ENCODE measurements at regions of chr20 and their contacts with region 1.

Region 1: GRCh38 chr20:31951530-31952453 is at the start of gene PDRG1:
- DNase-seq: peak; percentile 90 to 97
- ATAC-seq: peak; percentile 98
- total RNA-seq, gene PDRG1: 7.3 to 8.0 TPM

Region 2: DNA sequence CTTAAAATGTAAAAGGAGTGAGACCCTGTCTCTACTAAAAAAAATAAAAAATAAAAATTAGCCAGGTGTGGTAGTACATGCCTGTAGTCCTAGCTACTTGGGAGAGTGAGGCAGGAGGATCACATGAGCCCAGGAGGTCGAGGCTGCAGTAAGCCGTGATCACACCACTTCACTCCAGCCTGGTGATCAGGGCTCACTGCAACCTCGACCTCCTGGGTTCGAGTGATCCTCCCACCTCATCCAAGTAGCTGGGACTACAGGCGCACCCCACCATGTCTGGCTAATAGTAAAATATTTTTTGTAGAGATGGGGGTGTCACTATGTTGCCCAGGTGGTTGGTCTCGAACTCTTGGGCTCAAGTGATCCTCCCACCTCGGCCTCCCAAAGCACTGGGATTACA is 98.3 kb before region 1 on chr20:
- intact Hi-C with region 1: loop called in 1 of 2 experiments (anchors 2 kb)
- DNase-seq: no peak
- ATAC-seq: no peak